Upper lobe of right lung (tissue), 1 donor: ENCODE measurements at regions of chr5 and their contacts with region 1.

Region 1: DNA sequence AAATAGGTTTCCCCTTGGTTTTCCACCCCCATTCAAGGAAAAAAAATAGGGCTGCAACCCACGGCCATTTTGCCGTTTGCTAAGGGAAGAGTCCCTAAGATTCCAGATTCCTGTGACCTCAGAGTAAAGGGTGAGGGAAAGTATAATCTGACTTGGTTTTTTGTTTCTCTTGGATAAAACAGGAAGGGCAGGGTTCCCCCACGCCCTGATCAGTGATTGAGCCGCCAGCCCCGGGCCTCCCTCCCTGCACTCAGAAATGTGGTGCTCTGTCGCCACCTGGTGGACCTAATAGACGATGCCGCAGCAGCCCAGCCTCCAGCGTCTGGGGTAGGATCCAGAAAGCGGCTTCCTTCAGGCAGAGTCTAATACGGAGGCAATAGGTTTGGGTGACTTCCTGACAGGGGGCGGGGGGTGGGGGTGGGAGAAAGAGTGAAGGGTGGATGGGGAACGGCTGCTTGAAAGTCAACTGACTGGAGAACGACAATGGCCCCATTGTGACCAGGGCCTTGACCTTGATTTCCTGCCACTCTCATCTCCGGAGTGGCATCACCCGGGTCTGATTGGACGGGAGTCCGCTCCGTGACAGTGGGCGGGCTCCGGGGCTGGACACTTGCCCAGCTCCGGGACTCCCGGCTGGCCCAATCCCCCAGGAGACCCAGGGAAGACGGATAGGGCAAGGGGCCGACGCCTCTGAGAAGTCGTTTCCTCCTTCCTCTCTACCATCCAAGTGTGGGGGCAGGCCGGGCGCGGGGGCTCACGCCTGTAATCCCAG is 17.8 kb upstream of the CYSTM1 start:
- DNase-seq: peak; percentile 92
- ATAC-seq: peak; percentile 98
- H3K4me3 ChIP-seq: peak overlapping the region; percentile 34
- H3K27ac ChIP-seq: peak overlapping the region; percentile 39
- H3K4me1 ChIP-seq: peaks cover 30% of the 10 kb centered on the region
- H3K27me3 ChIP-seq: no peaks in the 10 kb centered on the region
- CTCF ChIP-seq: peak; percentile 90

Region 2: DNA sequence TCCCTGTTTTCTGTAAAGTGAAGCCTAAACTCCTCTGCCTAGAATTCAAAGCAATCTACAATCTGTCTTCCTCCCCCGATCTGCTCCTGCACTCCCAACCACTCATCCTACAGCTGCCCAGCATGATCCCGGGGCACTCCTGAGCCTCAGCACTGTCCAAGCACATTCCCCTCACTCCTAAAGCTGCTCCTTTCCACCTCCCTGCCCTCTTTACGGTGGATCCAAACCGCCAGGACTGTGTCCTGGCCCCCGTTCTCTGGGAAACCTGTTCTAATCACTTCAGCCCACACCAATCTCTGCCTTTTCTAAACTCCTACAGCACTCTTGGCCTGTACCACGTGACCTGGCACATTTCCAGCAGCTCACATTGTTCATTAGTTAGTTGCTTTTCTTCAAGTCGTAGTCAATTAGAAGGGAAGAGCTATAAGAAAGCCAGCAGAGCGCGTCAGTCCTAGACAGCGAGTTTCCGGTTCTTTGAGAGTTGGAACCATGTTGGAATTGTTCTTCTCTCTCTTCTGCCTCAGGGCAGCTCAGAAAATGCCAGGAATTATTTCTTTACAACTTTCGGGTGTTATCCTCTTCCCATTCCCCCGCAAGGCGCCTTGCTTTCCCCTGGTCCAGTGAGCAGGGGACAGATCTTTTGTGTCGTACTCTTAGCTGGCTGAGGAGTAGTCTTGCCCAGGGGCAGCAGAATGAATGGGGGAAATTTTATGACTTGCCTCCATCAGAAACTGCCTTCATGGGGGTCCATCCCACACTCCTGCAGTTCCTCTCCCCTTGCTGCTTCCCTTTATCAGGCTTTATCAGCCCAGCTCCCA is 174.9 kb before region 1 on chr5:
- intact Hi-C with region 1: no loop called
- DNase-seq: no peak
- ATAC-seq: no peak
- H3K4me3 ChIP-seq: no peak overlapping the region
- H3K27ac ChIP-seq: no peak overlapping the region
- H3K4me1 ChIP-seq: no peaks in the 10 kb centered on the region
- H3K27me3 ChIP-seq: no peaks in the 10 kb centered on the region
- CTCF ChIP-seq: no peak

Region 3: GRCh38 chr5:140075371-140075770 is 81.8 kb before region 1 on chr5:
- intact Hi-C with region 1: loop called (anchors 5 kb)
- DNase-seq: no peak
- ATAC-seq: no peak
- H3K4me3 ChIP-seq: no peak overlapping the region
- H3K27ac ChIP-seq: no peak overlapping the region
- H3K4me1 ChIP-seq: no peaks in the 10 kb centered on the region
- H3K27me3 ChIP-seq: peaks cover 5% of the 10 kb centered on the region
- CTCF ChIP-seq: peak; percentile 35

Region 4: DNA sequence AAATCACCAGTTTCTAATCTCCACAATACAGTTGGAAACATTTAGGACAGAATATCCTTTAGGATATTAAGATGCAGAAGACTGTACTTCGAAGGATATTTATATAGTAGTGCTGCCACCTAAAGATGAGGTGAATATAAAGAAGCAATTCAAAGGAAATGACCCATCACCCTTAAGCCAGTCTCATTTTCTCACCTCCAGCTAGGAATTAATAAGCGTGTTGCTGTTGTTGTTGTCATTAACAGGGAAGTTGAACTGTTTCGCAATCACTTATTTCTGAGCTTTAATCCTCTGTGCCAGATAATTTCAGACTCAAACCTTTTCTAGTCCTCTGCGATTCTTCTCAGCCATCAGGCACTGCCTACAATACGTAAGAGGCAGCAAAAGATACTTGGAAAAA is 51.1 kb before region 1 on chr5:
- intact Hi-C with region 1: no loop called
- DNase-seq: no peak
- ATAC-seq: no peak
- H3K4me3 ChIP-seq: no peak overlapping the region
- H3K27ac ChIP-seq: peak overlapping the region; percentile 99
- H3K4me1 ChIP-seq: peaks cover 25% of the 10 kb centered on the region
- H3K27me3 ChIP-seq: no peaks in the 10 kb centered on the region
- CTCF ChIP-seq: no peak